Left cardiac atrium (tissue), 4 donors: ENCODE measurements at regions of chr17 and their contacts with region 1.

Region 1: GRCh38 chr17:40287494-40288369 is at the start of gene CDC6:
- DNase-seq: peak; percentile 98
- ATAC-seq: peak; percentile 95 to 99
- total RNA-seq, gene CDC6: 1.3 to 1.9 TPM

Region 2: DNA sequence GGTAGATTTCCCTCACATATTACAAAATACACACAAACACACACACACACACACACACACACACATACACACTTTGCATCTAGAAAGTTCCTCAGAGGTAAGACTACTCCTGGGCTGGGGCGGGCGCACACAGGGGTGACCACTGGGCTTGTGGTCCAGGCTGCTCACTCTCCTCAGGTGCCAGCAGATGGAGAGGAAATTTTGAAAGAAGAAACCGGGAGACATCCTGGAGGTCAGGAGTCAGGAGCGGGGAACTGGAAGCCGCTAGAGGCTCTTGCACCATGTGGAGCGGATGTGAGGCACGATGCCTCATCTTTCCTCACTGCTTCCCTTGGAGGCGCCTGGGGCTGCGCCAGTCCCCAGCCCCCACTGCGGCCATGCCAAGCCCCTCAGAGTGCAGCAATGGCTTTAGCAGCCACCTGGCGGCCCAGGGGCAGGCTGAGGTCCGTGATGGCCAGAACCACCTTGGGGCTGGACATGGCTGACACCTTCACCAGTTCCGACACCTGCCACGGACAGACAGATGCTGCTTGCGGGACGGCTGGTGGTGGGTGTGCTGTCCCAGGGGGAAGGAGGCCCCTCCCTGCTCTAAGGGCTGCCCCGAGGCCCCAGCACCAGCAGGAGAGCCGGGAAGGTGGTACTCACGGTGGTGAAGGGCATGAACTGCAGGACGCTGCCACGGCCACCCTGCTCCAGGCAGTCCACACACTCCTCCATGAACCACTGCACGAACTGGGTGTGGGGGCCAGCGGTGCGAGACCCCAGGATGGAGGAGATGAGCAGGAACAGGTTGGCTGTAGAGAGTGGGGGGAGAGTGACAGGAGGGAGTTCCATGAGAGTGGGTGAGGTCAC is 268.4 kb before region 1 on chr17:
- intact Hi-C with region 1: loop called in 1 of 2 experiments (anchors 10 kb)
- DNase-seq: peak; percentile 48
- ATAC-seq: peak in 1 of 2 donors; percentile 11

Region 3: GRCh38 chr17:40203131-40203530 is 84.6 kb before region 1 on chr17:
- intact Hi-C with region 1: loop called (anchors 5 to 10 kb)
- DNase-seq: no peak
- ATAC-seq: peak; percentile 27 to 50

Region 4: DNA sequence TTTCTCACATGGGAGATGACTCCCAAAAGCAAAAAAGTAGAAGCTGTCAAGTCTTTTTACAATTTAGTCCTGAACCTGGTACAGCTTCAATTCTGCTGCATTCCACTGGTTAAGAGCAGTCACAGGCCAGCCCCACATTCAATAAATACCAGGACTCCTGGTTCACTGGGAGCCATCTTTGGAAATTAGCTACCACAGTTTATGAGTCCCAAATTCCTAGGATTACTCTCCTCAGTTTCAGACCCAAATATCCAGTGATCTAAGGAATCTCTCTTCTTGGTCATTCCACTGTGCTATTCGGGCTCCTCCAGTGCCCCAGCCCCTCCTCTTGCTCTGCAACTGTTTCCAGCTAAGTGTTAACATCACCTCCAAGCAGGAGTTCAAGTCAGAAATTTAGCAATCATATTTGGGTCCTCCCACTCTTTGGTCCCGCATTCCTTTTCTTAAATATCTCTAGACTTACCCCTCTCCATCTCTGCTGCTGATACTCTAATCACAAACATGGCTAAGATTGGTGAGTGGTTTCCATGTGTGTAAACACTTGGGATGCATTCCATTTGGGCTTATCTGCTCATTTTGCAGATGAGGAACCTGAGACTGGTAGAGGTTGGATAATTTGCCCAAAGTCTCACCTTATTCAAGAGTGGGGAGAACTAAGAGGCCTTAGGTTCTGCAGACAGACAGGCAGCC is 78.2 kb before region 1 on chr17:
- intact Hi-C with region 1: loop called (anchors 5 to 10 kb)
- DNase-seq: no peak
- ATAC-seq: peak in 1 of 2 donors; percentile 38

Region 5: GRCh38 chr17:40219073-40219860 is 68.5 kb before region 1 on chr17 and contains the start of gene WIPF2:
- intact Hi-C with region 1: loop called in 1 of 2 experiments (anchors 2 kb)
- DNase-seq: peak; percentile 97
- ATAC-seq: peak; percentile 99
- total RNA-seq, gene WIPF2: 13.9 to 14.4 TPM

Region 6: GRCh38 chr17:40230670-40231069 is 57.1 kb before region 1 on chr17:
- intact Hi-C with region 1: no loop called
- DNase-seq: no peak
- ATAC-seq: no peak

Region 7: DNA sequence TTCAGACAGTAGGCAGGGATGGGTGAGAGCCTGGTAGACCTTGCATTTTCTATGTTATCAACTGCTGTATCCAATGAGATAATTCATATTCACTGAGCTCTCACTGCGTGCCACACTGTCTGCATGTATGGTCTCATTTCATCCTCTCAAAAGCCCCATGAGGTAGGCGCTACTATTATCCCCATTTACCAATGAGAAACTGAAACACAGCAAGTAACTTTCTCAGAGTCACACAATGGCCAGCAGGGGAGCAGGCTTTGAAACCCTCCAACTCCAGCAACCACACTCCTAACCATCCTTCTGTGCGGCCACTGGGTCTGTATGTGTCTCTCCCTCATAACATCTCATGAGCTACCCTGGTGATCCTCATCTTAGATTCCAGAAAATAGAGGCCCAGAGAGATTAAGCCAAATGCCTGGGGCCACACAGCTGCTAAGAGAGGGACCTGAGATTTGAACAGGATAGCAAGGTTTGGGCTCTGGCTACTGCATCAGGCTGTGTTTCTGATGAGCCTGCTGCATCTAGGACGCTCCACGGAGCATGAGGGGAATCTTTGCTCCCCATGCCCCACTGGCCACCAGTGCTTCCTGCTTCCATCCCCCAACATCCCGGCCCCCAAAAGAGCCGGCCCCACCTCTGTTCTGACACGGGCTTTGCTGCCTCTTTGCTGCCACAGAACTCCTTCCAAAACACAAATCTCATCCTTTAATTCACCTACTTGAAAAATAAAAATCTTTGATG is 274.3 kb after region 1 on chr17:
- intact Hi-C with region 1: no loop called
- DNase-seq: no peak
- ATAC-seq: no peak